ENCODE measurements at regions of chr12 and their contacts with region 1.

Region 1: GRCh38 chr12:113980537-113981337 is 14.6 kb upstream of the RBM19 start:
- H3K4me3 Mint-ChIP-seq: no peak overlapping the region
- H3K27ac Mint-ChIP-seq: no peak overlapping the region
- H3K4me1 Mint-ChIP-seq: no peaks in the 10 kb centered on the region
- H3K27me3 Mint-ChIP-seq: peaks cover 13% of the 10 kb centered on the region

Region 2: DNA sequence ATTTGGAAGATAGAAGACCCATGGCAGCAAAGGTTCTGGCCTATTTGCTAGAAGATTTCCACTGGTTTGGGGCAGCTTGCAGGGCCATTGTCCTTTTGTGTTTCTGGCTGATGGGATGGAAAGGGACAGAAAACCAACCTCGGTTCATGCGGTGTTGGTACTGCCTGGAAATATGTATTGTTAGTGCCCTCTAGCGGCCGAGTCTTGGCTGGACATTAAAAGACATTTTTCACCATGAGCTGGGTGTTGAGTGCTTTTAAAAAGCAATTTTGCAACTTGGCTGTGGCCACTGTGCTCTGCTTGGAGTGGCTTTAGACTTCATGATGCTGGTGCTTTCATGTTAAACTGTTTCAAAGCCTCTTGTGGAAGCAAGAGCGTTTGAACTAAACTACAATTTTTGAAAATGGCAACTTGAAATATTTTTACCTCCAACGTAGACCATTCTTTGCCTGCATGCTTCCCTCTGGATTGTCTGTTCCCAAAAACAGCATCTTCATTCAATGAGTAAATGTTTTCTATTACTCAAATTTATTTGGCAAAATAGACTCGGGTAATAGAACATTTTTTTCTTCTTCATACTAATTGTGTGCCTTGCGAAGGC is 527.9 kb after region 1 on chr12:
- intact Hi-C with region 1: loop called (anchors 1 kb)
- H3K4me3 Mint-ChIP-seq: no peak overlapping the region
- H3K27ac Mint-ChIP-seq: no peak overlapping the region
- H3K4me1 Mint-ChIP-seq: no peaks in the 10 kb centered on the region
- H3K27me3 Mint-ChIP-seq: peaks cover 4% of the 10 kb centered on the region

Region 3: DNA sequence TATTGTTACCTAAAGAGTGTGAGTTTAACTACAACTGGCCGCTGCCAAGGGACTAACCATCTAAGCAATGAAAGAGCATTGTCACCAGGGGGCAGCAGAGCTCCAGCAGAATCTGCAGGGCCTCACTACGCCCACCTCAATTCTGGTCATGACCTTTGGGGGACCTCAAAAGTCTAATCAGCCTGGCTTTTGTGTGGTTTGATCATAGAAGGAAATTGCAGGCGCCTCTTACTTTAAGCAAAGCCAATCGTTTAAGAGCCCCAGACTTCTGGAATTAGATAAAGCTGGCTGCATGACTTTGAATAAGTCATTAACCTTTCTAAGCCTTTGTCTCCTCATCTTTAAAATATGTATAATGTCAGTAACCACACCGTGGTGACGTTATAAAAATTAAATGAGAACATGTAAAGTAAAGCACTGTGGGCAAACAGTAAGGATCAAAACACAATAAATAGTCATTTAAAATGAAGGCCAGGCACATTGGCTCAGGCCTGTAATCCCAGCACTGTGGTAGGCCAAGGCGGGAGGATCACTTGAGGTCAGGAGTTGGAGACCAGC is 644.6 kb after region 1 on chr12:
- intact Hi-C with region 1: loop called (anchors 5 kb)
- H3K4me3 Mint-ChIP-seq: no peak overlapping the region
- H3K27ac Mint-ChIP-seq: no peak overlapping the region
- H3K4me1 Mint-ChIP-seq: no peaks in the 10 kb centered on the region
- H3K27me3 Mint-ChIP-seq: no peaks in the 10 kb centered on the region